ENCODE measurements at regions of chr10 and their contacts with region 1.

Region 1: GRCh38 chr10:127906548-127907377 is at the start of gene PTPRE:
- DNase-seq: peak; percentile 44 to 77
- ATAC-seq: peak; percentile 97 to 98
- H3K4me3 ChIP-seq: peak within 1 kb of the TSS; percentile 73
- H3K27ac ChIP-seq: peak within 1 kb of the TSS; percentile 67 to 86
- H3K4me1 ChIP-seq: peaks cover 13% of the 10 kb centered on the region; the same call in 1 of the 3 replicates
- CTCF ChIP-seq: peak; percentile 88
- EP300 ChIP-seq: no peak
- POLR2A ChIP-seq: no peak
- RAD21 ChIP-seq: peak; percentile 69 to 94
- polyA plus RNA-seq, gene PTPRE: 0.22 and 0.31 TPM in 2 replicates

Region 2: GRCh38 chr10:127889605-127890195 is 17.1 kb before region 1 on chr10:
- CTCF ChIA-PET with region 1: interaction called, 26 read pairs
- POLR2A ChIA-PET with region 1: no interaction called
- DNase-seq: no peak
- ATAC-seq: peak; percentile 25 to 36; a peak in 1 of 6 replicates
- H3K4me3 ChIP-seq: no peak overlapping the region
- H3K27ac ChIP-seq: no peak overlapping the region
- H3K4me1 ChIP-seq: no peaks in the 10 kb centered on the region
- CTCF ChIP-seq: no peak
- EP300 ChIP-seq: no peak
- POLR2A ChIP-seq: no peak
- RAD21 ChIP-seq: no peak

Region 3: DNA sequence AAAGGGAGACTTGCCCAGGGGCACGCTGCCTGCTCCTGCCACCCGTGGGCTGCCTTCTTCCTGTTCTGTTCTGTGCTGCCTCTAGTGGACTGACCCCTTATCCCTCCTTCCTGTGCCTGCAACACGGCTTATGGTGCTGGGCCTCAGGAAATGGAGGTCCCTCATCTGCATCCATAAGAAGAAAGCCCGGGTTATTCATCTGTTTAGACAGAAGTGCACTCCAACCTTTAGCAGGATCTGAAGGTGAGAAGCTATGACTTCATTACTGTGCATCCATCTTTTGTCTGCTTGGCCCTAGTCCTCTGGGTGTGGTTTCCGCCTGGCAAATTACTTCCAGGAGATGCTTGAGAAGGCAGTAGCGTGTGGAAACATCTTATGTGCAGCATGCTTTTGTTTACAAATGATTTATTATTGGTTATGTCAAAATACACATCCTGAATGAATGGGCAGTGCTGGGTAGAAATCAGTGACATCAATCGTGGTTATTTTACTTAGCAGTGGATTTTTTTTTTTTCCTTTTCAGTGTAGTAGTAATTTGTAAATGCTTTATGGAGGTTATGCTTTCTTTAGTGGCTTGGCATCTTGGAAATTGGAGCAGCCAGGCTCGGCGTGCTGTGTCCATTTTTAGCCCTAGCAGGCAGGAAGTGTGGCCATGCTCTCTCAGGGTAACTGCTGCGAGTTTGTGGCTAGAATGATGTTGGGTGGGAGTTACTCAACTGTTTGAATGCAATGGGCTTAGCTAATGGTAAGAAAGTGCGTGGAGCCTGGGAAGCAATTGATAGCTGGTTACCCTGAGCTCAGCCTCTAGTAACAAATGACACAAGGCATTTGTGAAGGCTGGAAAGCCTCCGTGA is 12.9 kb after region 1 on chr10:
- CTCF ChIA-PET with region 1: interaction called, 33 read pairs
- POLR2A ChIA-PET with region 1: no interaction called
- DNase-seq: peak in 1 of 2 experiments; percentile 16
- ATAC-seq: peak in 1 of 2 experiments; percentile 68; a peak in 3 of 6 replicates
- H3K4me3 ChIP-seq: no peak overlapping the region
- H3K27ac ChIP-seq: peak overlapping the region in 1 of 2 experiments; percentile 19; a peak in 1 of 6 replicates
- H3K4me1 ChIP-seq: peaks cover 17% of the 10 kb centered on the region
- CTCF ChIP-seq: no peak
- EP300 ChIP-seq: no peak
- POLR2A ChIP-seq: no peak
- RAD21 ChIP-seq: no peak

Region 4: DNA sequence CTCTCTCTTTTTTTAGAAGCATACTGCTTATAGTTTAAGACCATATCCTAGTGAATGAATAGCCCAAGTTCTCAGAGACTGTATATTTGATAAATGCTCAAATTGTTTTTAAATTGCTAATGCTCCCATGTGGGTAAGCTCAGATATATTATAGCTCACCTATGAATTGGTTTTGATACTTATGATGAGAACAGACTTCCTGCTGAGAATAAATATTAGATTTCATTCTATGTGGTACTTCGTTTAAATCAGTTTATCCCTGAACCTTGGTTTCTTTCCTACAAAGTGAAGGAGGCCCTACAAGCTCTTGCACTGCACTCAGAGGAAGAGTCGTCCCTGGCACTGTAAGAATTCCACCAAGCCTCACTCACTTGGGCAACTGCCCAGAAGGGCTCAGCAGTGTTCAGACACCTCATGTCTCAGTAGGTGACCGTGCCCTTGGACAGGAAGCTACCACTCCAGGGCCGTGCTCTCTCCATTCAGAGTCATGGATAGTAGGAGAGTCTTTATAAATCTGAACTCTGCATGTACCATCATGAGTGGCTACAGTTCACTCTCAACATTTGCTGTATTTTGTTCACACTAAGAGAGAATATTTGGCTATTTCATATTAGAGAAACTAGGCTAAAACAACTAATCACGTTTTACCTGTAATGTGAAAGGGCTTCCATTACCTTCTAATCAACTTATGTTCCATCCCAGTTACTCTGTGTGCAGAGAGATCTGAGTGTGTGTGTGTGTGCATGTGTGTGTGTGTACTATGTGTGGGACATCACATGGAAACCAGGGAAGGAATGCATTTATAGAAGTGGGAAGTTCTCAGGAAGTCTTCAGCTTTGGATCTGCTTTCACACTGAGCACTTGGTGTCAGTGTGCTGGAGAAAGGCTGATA is 94.0 kb after region 1 on chr10:
- CTCF ChIA-PET with region 1: interaction called, 21 read pairs
- POLR2A ChIA-PET with region 1: no interaction called
- DNase-seq: no peak
- ATAC-seq: peak; percentile 27 to 57; a peak in 3 of 6 replicates
- H3K4me3 ChIP-seq: no peak overlapping the region
- H3K27ac ChIP-seq: no peak overlapping the region
- H3K4me1 ChIP-seq: no peaks in the 10 kb centered on the region
- CTCF ChIP-seq: no peak
- EP300 ChIP-seq: no peak
- POLR2A ChIP-seq: no peak
- RAD21 ChIP-seq: no peak

Region 5: GRCh38 chr10:128064108-128064969 is 157.6 kb after region 1 on chr10:
- CTCF ChIA-PET with region 1: interaction called, 89 read pairs
- POLR2A ChIA-PET with region 1: interaction called, 3 read pairs
- DNase-seq: no peak
- ATAC-seq: no peak
- H3K4me3 ChIP-seq: no peak overlapping the region
- H3K27ac ChIP-seq: peak overlapping the region in 1 of 2 experiments; percentile 27; a peak in 1 of 6 replicates
- H3K4me1 ChIP-seq: no peaks in the 10 kb centered on the region
- CTCF ChIP-seq: no peak
- EP300 ChIP-seq: no peak
- POLR2A ChIP-seq: no peak
- RAD21 ChIP-seq: no peak

Measured in A549 (cell line).